PC-9 (cell line): ENCODE measurements at regions of chr7 and their contacts with region 1.

Region 1: DNA sequence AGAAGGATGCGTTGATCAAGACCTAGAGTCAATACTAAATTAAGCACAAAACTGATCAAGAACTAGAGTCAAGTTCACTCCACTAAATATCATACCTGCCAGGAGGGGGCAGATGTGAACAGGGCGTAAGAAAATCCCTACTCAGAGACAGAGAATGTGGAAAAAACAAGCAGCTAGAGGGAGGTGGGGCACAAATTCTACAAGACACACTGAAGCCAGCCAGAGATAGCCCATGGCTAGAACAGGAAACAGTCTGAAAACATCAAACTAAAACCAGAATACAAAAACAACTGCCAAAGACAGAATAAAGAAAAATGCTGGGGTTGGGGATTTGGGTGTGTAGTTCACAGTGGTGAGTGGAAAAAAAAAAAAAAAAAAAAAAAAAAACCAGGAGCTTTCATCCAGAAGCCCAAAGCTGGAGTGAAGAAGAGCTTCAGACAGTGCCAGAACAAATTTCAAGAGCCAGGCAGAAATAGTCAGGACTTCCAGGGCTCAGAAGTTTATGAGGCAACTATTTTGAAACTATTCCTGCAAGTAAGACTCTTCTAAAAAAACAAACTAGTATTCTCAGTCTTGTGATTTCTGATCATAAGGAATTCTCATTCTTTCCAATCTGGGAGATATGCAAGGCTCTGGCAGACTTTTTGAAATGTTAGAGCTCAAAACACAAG is 118.3 kb downstream of the CCDC71L start:
- DNase-seq: peak; percentile 61 to 70
- H3K4me3 ChIP-seq: no peak overlapping the region
- H3K27ac ChIP-seq: no peak overlapping the region
- H3K4me1 ChIP-seq: peaks cover 8% of the 10 kb centered on the region; the same call in 1 of the 2 replicates
- H3K27me3 ChIP-seq: no peaks in the 10 kb centered on the region
- CTCF ChIP-seq: peak; percentile 82

Region 2: DNA sequence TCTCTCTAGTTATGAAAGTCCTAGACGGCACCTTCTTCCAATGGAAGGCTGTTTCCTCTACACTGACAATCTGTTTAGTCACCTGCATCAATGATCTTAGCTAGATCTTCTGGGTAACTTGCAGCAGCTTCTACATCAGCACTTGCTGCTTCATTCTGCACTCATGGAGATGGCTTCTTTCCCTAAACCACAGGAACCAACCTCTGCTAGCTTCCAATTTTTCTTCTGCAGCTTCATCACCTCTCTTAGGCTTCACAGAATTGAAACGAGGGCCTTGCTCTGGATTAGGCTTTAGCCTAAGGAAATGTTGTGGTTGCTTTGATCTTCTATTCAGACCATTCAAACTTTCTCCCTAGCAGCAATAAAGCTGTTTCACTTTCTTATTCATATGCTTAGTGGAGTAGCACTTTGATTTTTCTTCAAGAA is 282.5 kb before region 1 on chr7:
- CTCF ChIA-PET with region 1: interaction called, 9 read pairs
- POLR2A ChIA-PET with region 1: interaction called, 25 read pairs
- intact Hi-C with region 1: no loop called
- DNase-seq: no peak
- H3K4me3 ChIP-seq: no peak overlapping the region
- H3K27ac ChIP-seq: 0 out of 2 replicates have a peak overlapping the region, but pooled peaks have one; percentile 6
- H3K4me1 ChIP-seq: no peaks in the 10 kb centered on the region
- H3K27me3 ChIP-seq: no peaks in the 10 kb centered on the region
- CTCF ChIP-seq: no peak

Region 3: DNA sequence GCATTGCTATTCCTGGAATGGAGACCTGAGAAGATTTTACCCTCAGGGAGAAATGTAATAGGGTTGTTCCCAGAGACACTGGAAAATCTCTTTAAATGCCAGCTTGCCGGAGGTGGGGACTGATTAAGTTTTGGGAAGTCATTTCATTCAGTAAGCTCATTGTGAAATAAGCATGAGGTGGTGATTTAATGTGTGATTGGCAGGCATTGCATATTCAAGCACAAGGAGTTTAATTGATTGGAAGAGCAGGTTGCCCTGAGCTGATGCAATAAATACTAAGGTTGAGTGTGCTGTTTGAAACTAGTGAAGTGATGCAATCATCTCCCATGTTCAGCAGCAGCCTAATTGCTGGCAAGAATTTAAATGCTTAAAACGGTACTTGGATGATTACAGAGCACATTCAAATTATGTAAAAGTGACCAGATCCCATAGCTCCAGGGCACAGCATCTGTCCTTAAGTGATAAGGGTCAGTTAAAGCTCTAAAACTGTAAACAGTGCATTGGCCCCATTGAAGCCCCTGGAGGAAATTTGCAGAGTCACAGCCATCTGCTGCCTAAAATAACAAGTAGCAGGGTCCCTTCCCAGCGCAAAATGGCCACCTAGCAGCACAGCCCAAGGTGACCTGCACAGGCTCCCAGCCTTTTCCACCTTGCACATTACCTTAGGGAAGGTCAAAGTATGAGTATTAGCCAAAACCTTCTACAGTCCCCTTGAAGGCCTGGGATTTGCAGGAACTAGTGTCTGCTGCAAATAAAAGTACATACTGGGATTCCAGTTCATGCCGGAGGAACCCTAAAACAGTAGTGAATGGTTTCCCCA is 26.2 kb after region 1 on chr7:
- CTCF ChIA-PET with region 1: interaction called, 9 read pairs
- POLR2A ChIA-PET with region 1: no interaction called
- intact Hi-C with region 1: loop called (anchors 2 kb)
- DNase-seq: peak; percentile 70 to 96
- H3K4me3 ChIP-seq: no peak overlapping the region
- H3K27ac ChIP-seq: peak overlapping the region; percentile 99
- H3K4me1 ChIP-seq: peaks cover 30% of the 10 kb centered on the region
- H3K27me3 ChIP-seq: no peaks in the 10 kb centered on the region
- CTCF ChIP-seq: no peak

Region 4: DNA sequence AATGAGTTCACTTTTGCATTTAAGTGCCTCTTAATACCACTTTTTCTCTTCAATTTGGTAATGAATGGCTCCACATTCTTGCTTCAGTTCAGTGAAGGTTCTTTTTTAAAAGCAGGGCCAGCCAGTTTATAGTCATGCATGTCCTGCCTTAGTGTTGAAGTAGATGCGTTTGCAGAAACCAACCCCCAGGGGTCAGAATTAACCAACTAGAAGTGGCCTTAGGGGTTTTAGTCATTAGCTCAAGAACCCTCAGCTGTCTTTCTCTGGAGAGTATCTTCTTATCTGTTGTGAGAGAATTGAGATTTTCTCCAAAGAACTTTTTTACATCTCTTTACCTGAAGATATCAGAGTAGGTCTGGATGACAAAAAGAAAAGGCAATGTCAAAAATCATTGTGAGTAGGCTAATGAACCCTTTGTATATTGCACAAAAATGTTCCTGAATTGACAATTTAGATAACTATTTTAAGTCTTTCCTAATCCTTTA is 404.6 kb after region 1 on chr7:
- CTCF ChIA-PET with region 1: interaction called, 14 read pairs
- POLR2A ChIA-PET with region 1: no interaction called
- intact Hi-C with region 1: loop called (anchors 10 kb)
- DNase-seq: peak; percentile 50 to 60
- H3K4me3 ChIP-seq: no peak overlapping the region
- H3K27ac ChIP-seq: no peak overlapping the region
- H3K4me1 ChIP-seq: no peaks in the 10 kb centered on the region
- H3K27me3 ChIP-seq: no peaks in the 10 kb centered on the region; the same call in 1 of the 2 replicates
- CTCF ChIP-seq: peak; percentile 75

Region 5: DNA sequence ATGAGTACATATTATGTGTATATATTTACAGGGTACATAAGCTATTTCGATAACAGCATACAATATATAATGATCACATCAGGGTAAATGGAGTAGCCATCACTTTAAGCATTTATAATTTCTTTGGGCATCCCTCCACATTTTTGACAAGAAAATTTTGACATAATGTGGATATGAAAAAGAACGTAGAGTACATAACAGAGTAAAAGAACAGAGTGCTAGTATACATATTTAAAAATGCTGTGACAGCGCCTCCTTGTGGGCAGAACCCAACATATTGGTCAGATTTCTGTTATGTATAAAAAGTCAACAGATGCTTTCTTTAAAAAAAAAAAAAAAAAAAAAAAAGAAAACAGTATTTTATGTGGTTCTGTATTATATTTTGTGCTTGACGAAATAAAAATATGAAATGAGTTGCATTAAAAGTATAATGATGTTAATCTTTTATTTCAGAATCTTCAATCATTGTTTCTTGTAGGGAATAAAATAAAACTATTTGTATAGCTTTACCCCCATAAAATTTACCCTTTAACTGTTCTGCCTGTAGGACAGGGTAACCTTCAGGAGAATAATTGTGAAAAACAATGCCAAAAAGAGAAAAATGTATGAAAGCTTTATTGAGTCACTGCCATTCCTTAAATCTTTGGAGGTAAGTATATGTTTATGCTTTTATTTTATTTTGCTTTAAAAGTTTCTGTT is 607.8 kb after region 1 on chr7:
- CTCF ChIA-PET with region 1: interaction called, 3 read pairs
- POLR2A ChIA-PET with region 1: interaction called, 7 read pairs
- intact Hi-C with region 1: loop called (anchors 2 kb)
- DNase-seq: peak; percentile 45 to 70
- H3K4me3 ChIP-seq: no peak overlapping the region
- H3K27ac ChIP-seq: no peak overlapping the region
- H3K4me1 ChIP-seq: peaks cover 12% of the 10 kb centered on the region; the same call in 1 of the 2 replicates
- H3K27me3 ChIP-seq: no peaks in the 10 kb centered on the region
- CTCF ChIP-seq: peak; percentile 87